ENCODE measurements at regions of chr7 and their contacts with region 1.

Region 1: DNA sequence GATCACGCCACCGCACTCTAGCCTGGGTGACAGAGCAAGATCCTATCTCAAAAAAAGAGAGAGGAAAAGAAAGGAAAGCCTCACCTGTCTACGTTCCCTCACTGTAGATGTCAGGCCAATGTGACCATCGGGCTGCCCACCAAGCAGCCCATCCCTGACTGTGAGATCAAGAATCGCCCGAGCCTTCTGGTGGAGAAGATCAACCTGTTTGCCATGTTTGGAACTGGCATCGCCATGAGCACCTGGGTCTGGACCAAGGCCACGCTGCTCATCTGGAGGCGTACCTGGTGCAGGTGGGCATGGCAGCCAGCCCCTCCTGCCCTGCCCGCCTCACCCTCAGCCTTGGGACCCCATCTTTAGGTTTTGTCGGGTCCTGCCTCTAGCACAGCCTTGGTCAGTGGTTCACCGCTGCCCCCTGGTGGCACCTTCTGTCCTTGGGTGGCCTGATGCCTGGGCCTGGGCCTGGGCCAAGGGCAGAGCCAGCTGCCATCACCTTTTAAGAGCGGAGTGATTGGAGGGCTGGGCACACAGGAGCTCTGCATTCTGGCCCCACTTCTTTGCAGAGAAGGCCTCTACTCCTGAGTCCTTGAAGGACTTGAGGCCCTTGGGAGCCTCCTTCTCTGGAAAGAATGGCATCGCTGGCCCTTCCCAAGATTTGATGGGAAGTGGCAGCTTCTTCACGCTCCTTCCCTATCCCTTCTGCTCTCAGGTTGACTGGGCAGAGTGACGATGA is 14.4 kb upstream of the AHCYL2 start:
- DNase-seq: peak; percentile 74
- H3K4me3 ChIP-seq: no peak overlapping the region
- H3K27ac ChIP-seq: no peak overlapping the region
- H3K4me1 ChIP-seq: peaks cover 5% of the 10 kb centered on the region
- CTCF ChIP-seq: peak; percentile 83

Region 2: DNA sequence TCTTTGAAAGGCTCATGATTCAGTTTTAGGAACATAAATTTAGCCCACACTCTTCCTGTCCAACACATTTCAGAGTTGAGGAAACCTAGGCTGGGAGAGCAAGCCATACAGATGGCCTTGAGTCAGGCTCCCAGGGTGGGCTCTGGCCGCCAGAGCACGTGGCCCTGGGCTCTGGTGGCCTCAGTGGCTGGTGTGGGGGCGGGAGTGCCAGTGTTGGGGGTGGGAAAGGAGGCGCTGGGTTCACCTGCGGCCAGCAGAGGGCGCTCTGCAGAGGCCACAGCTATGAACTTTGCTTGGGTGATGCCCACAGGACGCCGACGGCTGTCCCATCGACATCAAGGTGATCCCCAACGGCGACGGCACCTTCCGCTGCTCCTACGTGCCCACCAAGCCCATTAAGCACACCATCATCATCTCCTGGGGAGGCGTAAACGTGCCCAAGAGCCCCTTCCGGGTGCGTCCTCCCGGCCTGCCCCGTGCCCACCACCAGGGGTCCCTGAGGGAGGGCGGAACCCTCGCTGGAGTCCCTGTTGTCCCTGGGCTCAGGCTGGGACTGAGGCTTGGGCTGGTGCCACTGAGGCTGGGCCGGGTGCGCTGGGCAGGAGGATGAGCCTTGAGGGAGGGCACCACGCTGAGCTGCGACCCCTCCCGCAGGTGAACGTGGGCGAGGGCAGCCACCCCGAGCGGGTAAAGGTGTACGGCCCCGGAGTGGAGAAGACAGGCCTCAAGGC is 368.3 kb before region 1 on chr7:
- CTCF ChIA-PET with region 1: no interaction called
- POLR2A ChIA-PET with region 1: no interaction called
- intact Hi-C with region 1: loop called (anchors 5 kb)
- DNase-seq: peak; percentile 66
- H3K4me3 ChIP-seq: no peak overlapping the region
- H3K27ac ChIP-seq: no peak overlapping the region
- H3K4me1 ChIP-seq: peaks cover 3% of the 10 kb centered on the region
- CTCF ChIP-seq: peak; percentile 92

Region 3: GRCh38 chr7:128904381-128905197 is 305.8 kb before region 1 on chr7:
- CTCF ChIA-PET with region 1: no interaction called
- POLR2A ChIA-PET with region 1: no interaction called
- intact Hi-C with region 1: loop called (anchors 5 kb)
- DNase-seq: peak; percentile 85
- H3K4me3 ChIP-seq: no peak overlapping the region
- H3K27ac ChIP-seq: no peak overlapping the region
- H3K4me1 ChIP-seq: peaks cover 5% of the 10 kb centered on the region
- CTCF ChIP-seq: peak; percentile 90

Region 4: GRCh38 chr7:129144095-129144833 is 66.2 kb before region 1 on chr7 and contains the start of gene TSPAN33:
- CTCF ChIA-PET with region 1: no interaction called
- POLR2A ChIA-PET with region 1: no interaction called
- intact Hi-C with region 1: loop called (anchors 2 kb)
- DNase-seq: peak; percentile 78
- H3K4me3 ChIP-seq: peak within 1 kb of the TSS; percentile 76
- H3K27ac ChIP-seq: peak within 1 kb of the TSS; percentile 60
- H3K4me1 ChIP-seq: peaks cover 38% of the 10 kb centered on the region
- CTCF ChIP-seq: no peak
- total RNA-seq, gene TSPAN33: 11.5 and 14.6 TPM in 2 replicates

Region 5: GRCh38 chr7:129163875-129164544 is 46.4 kb before region 1 on chr7:
- CTCF ChIA-PET with region 1: interaction called, 9 read pairs
- POLR2A ChIA-PET with region 1: no interaction called
- intact Hi-C with region 1: loop called (anchors 1 kb)
- DNase-seq: peak; percentile 69
- H3K4me3 ChIP-seq: no peak overlapping the region
- H3K27ac ChIP-seq: no peak overlapping the region
- H3K4me1 ChIP-seq: peaks cover 51% of the 10 kb centered on the region
- CTCF ChIP-seq: peak; percentile 98